Right ventricle myocardium superior (tissue), 1 donor: ENCODE measurements at regions of chr16 and their contacts with region 1.

Region 1: DNA sequence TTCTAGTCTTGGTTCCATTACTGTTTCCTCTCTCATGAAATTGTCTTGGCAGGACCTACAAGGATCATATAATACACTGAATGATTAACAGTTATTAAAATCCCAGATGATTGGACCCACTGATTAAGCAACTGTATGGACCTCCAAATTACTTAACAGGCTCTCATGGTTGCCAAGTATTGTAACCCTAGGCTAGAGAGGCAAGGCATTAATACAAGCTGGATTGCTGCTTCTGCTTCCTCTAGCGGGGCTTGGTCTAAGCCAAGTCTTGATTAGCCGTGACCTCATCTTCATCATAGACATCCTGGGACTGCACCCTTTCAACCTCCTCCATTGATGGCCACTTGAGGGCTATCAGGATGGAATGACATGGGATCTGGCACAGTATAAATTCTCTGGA is 46.9 kb downstream of the SYCE1L start:
- DNase-seq: no peak
- ATAC-seq: no peak

Region 2: GRCh38 chr16:77308163-77308561 is 62.0 kb after region 1 on chr16:
- intact Hi-C with region 1: loop called (anchors 10 kb)
- DNase-seq: no peak
- ATAC-seq: no peak